ENCODE measurements at regions of chr3 and their contacts with region 1.

Region 1: DNA sequence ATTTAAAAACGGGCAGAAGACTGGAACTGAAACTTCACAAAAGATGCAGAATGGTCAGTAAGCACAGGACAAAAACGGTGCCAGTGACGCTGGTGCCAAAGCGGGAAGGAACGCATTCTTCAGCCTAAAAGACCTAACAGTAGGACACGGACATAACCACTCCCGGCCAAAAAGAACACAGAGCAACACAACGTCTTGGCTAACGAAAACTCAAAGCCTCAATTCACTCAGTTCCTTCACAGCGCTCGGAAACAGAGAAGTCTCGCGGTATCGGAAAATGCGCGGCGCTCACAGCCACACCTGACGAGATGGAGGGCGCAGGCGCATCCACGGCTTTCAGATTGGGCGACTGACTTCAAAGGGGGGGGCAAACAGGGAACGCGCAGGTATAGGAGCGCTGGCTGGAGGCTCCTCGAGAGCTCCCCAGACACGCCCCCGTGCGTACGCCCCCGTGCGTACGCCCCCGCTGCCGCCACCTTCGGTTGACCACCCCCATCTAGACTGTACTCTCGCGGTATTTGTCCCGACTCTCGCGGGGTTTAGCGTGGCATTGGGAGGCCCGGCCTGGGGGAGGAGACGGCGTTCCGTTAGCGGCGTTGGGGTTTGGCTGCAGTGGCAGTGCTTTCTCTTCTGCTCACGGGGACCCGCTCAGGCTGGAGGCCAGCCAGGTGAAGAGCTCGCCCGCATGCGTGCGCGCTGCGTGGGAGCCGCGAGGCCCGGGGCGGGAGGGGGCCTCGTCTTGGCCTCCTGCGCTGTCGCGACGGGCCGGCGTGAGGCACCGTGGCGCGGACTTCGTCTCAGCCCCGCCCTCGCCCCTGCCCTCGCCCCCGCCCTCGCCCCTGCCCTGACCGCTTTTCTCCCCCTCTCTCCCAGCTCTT is at the start of gene NKTR:
- DNase-seq: peak; percentile 100
- ATAC-seq: peak; percentile 91
- H3K4me3 Mint-ChIP-seq: peak within 1 kb of the TSS; percentile 80
- H3K27ac Mint-ChIP-seq: peak within 1 kb of the TSS; percentile 95
- H3K4me1 Mint-ChIP-seq: peaks cover 33% of the 10 kb centered on the region
- H3K27me3 Mint-ChIP-seq: no peaks in the 10 kb centered on the region
- total RNA-seq, gene NKTR: 50.8 to 59.2 TPM

Region 2: DNA sequence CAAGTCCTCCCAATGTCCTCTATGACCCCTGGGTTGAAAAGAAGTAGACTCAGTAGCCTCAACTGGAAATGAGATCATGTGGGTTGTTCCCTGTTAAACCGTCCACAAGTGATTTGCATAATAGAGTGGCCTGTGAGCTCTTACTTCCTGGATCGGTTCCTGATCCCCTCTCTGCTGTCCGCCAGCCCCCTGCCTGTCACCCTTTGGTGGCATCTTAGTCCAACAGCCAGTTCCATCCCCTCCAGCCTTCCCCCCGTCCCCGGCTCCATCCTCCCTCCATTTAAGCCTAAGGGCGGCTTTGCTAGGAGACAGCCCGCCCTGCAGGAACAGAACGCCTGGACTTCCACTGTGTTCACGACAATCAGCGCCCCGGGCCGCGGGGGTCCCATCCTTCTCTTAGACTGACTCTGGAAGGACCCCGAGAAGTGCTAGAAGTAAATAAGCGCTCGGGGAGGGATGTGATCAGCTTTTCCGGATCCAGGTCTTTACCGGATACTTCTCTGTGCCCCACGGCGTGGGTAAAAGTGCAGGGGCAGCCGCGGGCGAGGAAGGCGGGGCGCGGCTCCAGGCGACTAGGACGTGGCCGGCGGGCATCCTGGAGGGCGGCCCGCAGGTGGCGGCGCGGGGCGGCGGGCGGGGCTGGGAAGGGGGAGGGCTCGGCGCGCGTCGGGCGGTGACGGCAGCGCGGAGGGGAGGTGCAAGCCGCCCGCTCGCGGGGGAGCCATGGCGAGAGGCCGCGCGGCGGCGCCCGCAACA is 587.2 kb before region 1 on chr3:
- CTCF ChIA-PET with region 1: no interaction called
- POLR2A ChIA-PET with region 1: no interaction called
- intact Hi-C with region 1: loop called in 1 of 2 experiments (anchors 5 kb)
- DNase-seq: peak; percentile 88
- ATAC-seq: peak; percentile 75
- H3K4me3 Mint-ChIP-seq: peak overlapping the region; percentile 90
- H3K27ac Mint-ChIP-seq: peak overlapping the region; percentile 92
- H3K4me1 Mint-ChIP-seq: peaks cover 46% of the 10 kb centered on the region
- H3K27me3 Mint-ChIP-seq: no peaks in the 10 kb centered on the region

Region 3: GRCh38 chr3:42129014-42129953 is 471.1 kb before region 1 on chr3:
- CTCF ChIA-PET with region 1: no interaction called
- POLR2A ChIA-PET with region 1: no interaction called
- intact Hi-C with region 1: no loop called
- DNase-seq: no peak
- ATAC-seq: peak; percentile 33
- H3K4me3 Mint-ChIP-seq: no peak overlapping the region
- H3K27ac Mint-ChIP-seq: no peak overlapping the region
- H3K4me1 Mint-ChIP-seq: peaks cover 2% of the 10 kb centered on the region
- H3K27me3 Mint-ChIP-seq: no peaks in the 10 kb centered on the region

Region 4: DNA sequence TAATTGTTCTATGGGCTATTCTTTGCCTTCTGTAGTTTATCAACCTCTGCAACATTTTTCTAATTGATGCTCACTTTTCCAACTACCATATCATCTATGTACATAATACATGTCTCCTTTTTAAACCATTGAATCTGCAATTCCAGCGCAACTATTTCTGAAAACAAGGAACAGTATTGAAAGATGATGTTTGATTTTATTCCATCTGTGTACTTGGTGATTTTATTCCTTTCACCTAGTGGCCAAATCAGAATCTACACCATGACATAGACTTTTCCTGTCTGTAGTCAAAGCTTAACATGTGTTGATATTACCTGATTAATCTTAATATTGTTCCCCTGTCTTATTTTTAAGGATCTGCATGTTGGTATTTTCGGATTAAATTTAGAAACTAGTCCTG is 13.1 kb after region 1 on chr3:
- CTCF ChIA-PET with region 1: interaction called, 17 read pairs
- POLR2A ChIA-PET with region 1: no interaction called
- intact Hi-C with region 1: no loop called
- DNase-seq: no peak
- ATAC-seq: peak; percentile 49
- H3K4me3 Mint-ChIP-seq: no peak overlapping the region
- H3K27ac Mint-ChIP-seq: peak overlapping the region; percentile 1
- H3K4me1 Mint-ChIP-seq: peaks cover 63% of the 10 kb centered on the region
- H3K27me3 Mint-ChIP-seq: no peaks in the 10 kb centered on the region

Region 5: GRCh38 chr3:43105596-43106292 is 505.4 kb after region 1 on chr3 and contains the start of gene POMGNT2:
- CTCF ChIA-PET with region 1: no interaction called
- POLR2A ChIA-PET with region 1: no interaction called
- intact Hi-C with region 1: loop called in 1 of 2 experiments (anchors 1 kb)
- DNase-seq: peak; percentile 94
- ATAC-seq: peak; percentile 97
- H3K4me3 Mint-ChIP-seq: peak within 1 kb of the TSS; percentile 72
- H3K27ac Mint-ChIP-seq: peak within 1 kb of the TSS; percentile 58
- H3K4me1 Mint-ChIP-seq: peaks cover 16% of the 10 kb centered on the region
- H3K27me3 Mint-ChIP-seq: no peaks in the 10 kb centered on the region
- total RNA-seq, gene POMGNT2: 8.3 to 8.6 TPM